Mammary epithelial cell (primary cell): ENCODE measurements at regions of chr7 and their contacts with region 1.

Region 1: DNA sequence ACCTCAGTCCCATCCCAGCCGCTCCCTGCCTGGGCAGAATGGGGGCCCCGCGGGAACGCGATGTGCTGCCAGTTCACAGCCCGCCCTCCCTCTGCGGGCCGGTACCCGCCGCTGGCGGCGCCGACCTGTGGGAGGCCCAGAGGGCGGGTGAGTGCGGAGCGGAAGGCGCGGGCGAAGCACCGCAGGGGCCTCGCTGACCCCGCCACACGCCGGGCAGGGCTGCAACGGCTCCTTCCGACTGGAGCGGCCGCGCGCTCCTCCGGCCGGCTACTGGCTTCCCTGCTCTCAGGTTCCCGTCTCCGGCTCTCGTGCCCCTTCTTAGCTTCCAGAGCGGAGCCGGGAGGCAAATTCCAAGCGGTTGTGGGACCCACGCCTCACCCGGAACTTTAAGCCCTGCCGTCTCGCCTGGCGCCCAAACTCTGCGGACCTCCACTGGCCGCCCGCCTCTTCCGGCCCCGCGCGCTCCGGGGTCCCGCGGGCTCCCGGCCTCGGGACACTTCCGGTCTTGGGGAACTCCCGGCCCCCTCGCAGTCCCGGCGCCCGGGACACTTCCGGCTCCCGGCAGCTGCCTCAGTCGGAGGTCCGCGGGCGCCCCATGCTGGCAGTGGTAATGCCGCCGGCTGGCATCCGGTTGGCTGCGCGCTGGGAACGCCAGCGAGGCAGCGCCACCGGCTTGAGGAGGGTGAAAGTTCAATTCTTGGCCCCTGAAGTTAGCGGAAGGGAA is at the start of gene CYREN:
- DNase-seq: peak; percentile 94
- H3K4me3 ChIP-seq: peak within 1 kb of the TSS; percentile 52 to 83 (median 79)
- H3K27ac ChIP-seq: peak within 1 kb of the TSS; percentile 91
- H3K4me1 ChIP-seq: peaks cover 31% of the 10 kb centered on the region
- H3K27me3 ChIP-seq: no peaks in the 10 kb centered on the region
- CTCF ChIP-seq: peak; percentile 26 to 75
- total RNA-seq, gene CYREN: 45.2 to 55.8 TPM

Region 2: GRCh38 chr7:134632937-134633540 is 537.4 kb before region 1 on chr7:
- CTCF ChIA-PET with region 1: no interaction called
- dilution Hi-C with region 1: no loop called
- in situ Hi-C with region 1: no loop called
- intact Hi-C with region 1: loop called (anchors 5 kb)
- DNase-seq: peak; percentile 57
- H3K4me3 ChIP-seq: no peak overlapping the region
- H3K27ac ChIP-seq: no peak overlapping the region
- H3K4me1 ChIP-seq: peaks cover 7% of the 10 kb centered on the region
- H3K27me3 ChIP-seq: no peaks in the 10 kb centered on the region
- CTCF ChIP-seq: peak; percentile 65 to 66

Region 3: GRCh38 chr7:134891262-134891695 is 279.2 kb before region 1 on chr7:
- CTCF ChIA-PET with region 1: no interaction called
- dilution Hi-C with region 1: no loop called
- in situ Hi-C with region 1: no loop called
- intact Hi-C with region 1: loop called (anchors 5 kb)
- DNase-seq: peak; percentile 98
- H3K4me3 ChIP-seq: peak overlapping the region; percentile 74 to 90 (median 75)
- H3K27ac ChIP-seq: peak overlapping the region; percentile 88
- H3K4me1 ChIP-seq: peaks cover 37% of the 10 kb centered on the region
- H3K27me3 ChIP-seq: no peaks in the 10 kb centered on the region
- CTCF ChIP-seq: no peak

Region 4: DNA sequence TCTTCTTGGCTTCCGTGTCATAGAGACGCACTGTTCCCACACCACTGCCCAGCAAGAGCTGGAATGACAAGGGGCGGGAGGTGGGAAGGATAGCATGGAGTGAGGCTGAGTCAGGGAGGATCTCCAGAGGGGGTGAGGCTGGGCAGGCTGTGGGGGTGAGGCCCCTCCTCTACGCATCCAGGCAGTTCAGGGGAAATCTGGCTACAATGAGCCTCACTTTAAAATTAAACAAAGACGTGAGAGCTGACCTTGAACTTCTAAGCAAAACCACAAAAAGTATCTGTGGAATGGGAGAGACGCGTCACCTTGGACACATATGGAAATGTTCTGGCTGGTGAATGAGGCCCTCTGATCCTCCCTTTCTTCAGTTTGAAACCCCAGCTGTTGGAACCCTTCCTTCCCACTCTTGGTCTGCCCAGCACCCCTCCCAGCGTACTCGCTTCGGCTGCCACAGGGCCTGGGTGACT is 23.2 kb after region 1 on chr7:
- CTCF ChIA-PET with region 1: no interaction called
- dilution Hi-C with region 1: no loop called
- in situ Hi-C with region 1: no loop called
- intact Hi-C with region 1: loop called (anchors 1 kb)
- DNase-seq: peak; percentile 87
- H3K4me3 ChIP-seq: peak overlapping the region in 1 of 3 experiments; percentile 28
- H3K27ac ChIP-seq: peak overlapping the region; percentile 68
- H3K4me1 ChIP-seq: peaks cover 44% of the 10 kb centered on the region
- H3K27me3 ChIP-seq: no peaks in the 10 kb centered on the region
- CTCF ChIP-seq: no peak

Region 5: GRCh38 chr7:135274495-135275268 is 104.2 kb after region 1 on chr7:
- CTCF ChIA-PET with region 1: no interaction called
- dilution Hi-C with region 1: no loop called
- in situ Hi-C with region 1: no loop called
- intact Hi-C with region 1: loop called (anchors 1 kb)
- DNase-seq: peak; percentile 57
- H3K4me3 ChIP-seq: no peak overlapping the region
- H3K27ac ChIP-seq: no peak overlapping the region
- H3K4me1 ChIP-seq: no peaks in the 10 kb centered on the region
- H3K27me3 ChIP-seq: no peaks in the 10 kb centered on the region
- CTCF ChIP-seq: peak; percentile 80 to 82